Transverse colon (tissue), 4 donors: ENCODE measurements at regions of chr15 and their contacts with region 1.

Region 1: DNA sequence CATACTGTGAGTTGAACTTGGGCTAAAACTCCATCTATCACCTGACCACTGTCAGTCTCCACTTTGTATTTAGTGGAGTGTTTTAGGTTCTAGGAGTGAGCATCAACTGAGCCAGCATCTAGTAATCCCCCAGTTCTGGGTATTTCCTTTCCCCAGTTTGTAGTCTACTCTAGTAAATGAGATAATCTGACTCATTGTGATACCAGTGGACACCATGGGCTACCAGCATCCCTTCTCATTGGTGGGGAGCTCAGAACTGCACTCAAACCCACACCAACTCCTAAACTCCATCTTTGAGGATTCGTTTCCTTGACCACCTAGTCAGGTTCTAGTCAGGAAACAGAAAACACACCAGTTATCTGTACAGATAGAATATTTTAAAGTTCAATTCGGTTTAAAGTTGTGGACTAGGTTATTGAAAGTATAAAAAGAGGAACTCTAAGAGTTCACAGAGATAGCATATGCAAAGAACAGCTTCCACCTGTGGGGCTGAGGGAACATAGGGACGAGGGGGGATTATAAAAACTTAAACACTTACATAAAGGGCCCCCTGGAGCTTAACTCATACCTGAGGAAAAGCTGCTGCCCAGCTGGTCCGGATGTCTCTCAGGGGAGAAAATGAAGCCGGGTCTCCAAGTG is 36.0 kb downstream of the LEO1 start:
- DNase-seq: no peak
- H3K4me3 ChIP-seq: no peak overlapping the region
- H3K27ac ChIP-seq: no peak overlapping the region
- H3K4me1 ChIP-seq: no peaks in the 10 kb centered on the region
- H3K27me3 ChIP-seq: no peaks in the 10 kb centered on the region
- CTCF ChIP-seq: no peak
- EP300 ChIP-seq: no peak
- POLR2A ChIP-seq: no peak

Region 2: DNA sequence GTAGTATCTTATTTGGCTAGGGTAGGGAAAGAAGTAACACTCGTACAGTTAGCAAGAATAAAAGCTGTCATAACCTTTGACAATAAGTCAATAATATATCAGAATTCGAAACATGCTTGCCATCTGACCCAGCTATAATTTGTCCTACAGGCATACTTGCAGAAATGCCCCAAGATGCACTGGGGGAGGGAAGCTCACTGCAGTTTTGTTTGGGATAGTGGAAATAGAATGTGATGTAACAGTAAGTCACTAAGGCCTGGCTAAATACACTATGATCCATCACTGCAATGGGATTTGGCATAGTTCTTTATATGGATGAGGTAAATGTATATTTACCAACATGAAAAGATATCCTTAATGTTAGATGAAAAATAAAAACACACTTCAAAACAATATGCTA is 131.6 kb before region 1 on chr15:
- in situ Hi-C with region 1: no loop called
- intact Hi-C with region 1: no loop called
- DNase-seq: no peak
- H3K4me3 ChIP-seq: no peak overlapping the region
- H3K27ac ChIP-seq: no peak overlapping the region
- H3K4me1 ChIP-seq: no peaks in the 10 kb centered on the region
- H3K27me3 ChIP-seq: no peaks in the 10 kb centered on the region
- CTCF ChIP-seq: no peak
- EP300 ChIP-seq: no peak
- POLR2A ChIP-seq: no peak

Region 3: DNA sequence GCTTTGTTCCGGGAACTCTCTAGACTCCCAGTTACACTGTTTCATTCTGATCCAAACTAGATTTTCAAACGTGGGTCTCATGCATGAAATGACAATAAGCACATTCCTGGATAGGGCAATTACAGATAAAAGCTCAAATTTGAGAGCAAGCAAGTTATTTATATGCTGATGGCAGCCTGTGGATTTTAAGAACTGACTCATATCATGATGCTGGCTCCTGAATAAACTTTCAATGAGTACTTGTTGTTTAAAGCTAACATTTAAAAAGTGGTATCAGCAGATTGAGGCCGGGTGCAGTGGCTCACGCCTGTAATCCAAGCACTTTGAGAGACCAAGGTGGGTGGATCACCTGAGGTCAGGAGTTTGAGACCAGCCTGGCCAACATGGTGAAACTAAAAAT is 30.7 kb before region 1 on chr15:
- in situ Hi-C with region 1: no loop called
- intact Hi-C with region 1: loop called (anchors 1 kb)
- DNase-seq: no peak
- H3K4me3 ChIP-seq: no peak overlapping the region
- H3K27ac ChIP-seq: no peak overlapping the region
- H3K4me1 ChIP-seq: no peaks in the 10 kb centered on the region
- H3K27me3 ChIP-seq: no peaks in the 10 kb centered on the region
- CTCF ChIP-seq: no peak
- EP300 ChIP-seq: no peak
- POLR2A ChIP-seq: no peak

Region 4: GRCh38 chr15:51971375-51972133 is 36.0 kb after region 1 on chr15 and contains the start of gene LEO1:
- in situ Hi-C with region 1: no loop called
- intact Hi-C with region 1: no loop called
- DNase-seq: peak; percentile 92
- H3K4me3 ChIP-seq: peak within 1 kb of the TSS; percentile 63 to 95 (median 72)
- H3K27ac ChIP-seq: peak within 1 kb of the TSS; percentile 90 to 93 (median 91)
- H3K4me1 ChIP-seq: peaks cover 6 to 19% (median 15%) of the 10 kb centered on the region in 4 donors
- H3K27me3 ChIP-seq: no peaks in the 10 kb centered on the region
- CTCF ChIP-seq: peak; percentile 20 to 63 (median 36)
- EP300 ChIP-seq: no peak
- POLR2A ChIP-seq: peak; percentile 72
- total RNA-seq, gene LEO1: 27.2 to 38.2 (median 30.9) TPM

Region 5: DNA sequence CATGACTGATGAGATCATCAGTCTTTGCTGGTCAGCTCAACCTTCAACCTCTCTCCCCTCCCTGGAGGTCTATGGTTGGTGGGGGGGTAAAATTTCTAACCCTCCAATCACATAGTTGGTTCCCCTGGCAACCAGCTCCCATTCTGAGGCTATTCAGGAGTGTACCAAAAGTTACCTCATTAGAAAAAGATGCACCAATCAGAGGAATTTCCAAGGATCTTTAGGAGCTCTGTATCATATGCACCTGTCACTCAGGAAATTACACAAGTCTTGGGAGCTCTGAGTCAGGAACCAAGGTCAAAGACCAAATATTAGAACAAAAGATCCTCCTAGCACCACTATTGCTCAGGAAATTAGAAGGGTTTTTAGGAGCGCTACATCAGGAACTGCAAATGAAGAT is 57.4 kb after region 1 on chr15:
- in situ Hi-C with region 1: no loop called
- intact Hi-C with region 1: no loop called
- DNase-seq: no peak
- H3K4me3 ChIP-seq: no peak overlapping the region
- H3K27ac ChIP-seq: no peak overlapping the region
- H3K4me1 ChIP-seq: peaks cover 0 to 16% (median 8%) of the 10 kb centered on the region in 4 donors
- H3K27me3 ChIP-seq: no peaks in the 10 kb centered on the region
- CTCF ChIP-seq: no peak
- EP300 ChIP-seq: no peak
- POLR2A ChIP-seq: no peak

Region 6: DNA sequence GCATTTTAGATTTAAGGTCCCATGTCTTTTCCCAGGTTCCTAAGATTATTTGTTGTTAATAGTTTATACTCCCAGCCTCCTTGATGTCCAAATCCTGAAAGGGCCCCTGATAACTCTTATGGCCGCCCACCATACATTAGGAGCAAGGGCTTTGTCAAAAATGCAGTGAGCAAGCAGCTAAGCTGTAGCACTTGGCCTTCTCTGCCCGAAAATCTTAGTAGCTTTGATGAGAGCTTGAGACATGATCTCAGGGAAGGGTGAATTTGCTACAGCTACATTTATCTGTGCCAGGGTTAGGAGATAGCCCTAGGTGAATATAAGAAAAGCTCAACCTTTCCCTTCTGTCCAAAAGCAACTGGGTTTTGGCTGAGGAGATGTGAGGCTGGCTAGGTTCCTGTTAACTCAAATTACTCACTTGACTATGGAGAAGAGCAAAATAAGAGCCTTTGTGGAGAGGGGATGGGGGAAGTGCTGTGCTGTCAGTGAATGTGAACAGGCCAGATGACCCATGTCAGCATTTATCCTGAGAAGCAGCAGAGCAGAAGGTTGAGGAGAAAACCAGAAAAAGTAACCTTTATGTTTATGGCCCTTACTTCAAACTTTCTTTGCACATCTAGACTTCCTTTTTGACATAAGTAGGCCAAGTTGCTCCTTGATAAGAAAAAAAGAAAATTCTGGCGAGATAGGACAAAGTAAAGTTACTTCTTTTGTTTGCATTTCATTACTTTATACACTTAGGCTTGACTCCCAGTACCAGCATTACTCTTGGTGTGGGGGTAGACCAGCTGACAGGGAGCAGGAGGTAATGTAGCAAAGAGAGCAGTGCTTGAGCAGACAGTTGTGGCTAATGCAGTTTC is 104.6 kb after region 1 on chr15:
- in situ Hi-C with region 1: loop called in 1 of 4 experiments (anchors 25 kb)
- intact Hi-C with region 1: no loop called
- DNase-seq: no peak
- H3K4me3 ChIP-seq: no peak overlapping the region
- H3K27ac ChIP-seq: peak overlapping the region in 3 of 4 donors; percentile 12 to 37 (median 20)
- H3K4me1 ChIP-seq: peaks cover 14 to 62% (median 20%) of the 10 kb centered on the region in 4 donors
- H3K27me3 ChIP-seq: no peaks in the 10 kb centered on the region
- CTCF ChIP-seq: no peak
- EP300 ChIP-seq: no peak
- POLR2A ChIP-seq: no peak